Heart right ventricle (tissue), 16 donors: ENCODE measurements at regions of chr1 and their contacts with region 1.

Region 1: DNA sequence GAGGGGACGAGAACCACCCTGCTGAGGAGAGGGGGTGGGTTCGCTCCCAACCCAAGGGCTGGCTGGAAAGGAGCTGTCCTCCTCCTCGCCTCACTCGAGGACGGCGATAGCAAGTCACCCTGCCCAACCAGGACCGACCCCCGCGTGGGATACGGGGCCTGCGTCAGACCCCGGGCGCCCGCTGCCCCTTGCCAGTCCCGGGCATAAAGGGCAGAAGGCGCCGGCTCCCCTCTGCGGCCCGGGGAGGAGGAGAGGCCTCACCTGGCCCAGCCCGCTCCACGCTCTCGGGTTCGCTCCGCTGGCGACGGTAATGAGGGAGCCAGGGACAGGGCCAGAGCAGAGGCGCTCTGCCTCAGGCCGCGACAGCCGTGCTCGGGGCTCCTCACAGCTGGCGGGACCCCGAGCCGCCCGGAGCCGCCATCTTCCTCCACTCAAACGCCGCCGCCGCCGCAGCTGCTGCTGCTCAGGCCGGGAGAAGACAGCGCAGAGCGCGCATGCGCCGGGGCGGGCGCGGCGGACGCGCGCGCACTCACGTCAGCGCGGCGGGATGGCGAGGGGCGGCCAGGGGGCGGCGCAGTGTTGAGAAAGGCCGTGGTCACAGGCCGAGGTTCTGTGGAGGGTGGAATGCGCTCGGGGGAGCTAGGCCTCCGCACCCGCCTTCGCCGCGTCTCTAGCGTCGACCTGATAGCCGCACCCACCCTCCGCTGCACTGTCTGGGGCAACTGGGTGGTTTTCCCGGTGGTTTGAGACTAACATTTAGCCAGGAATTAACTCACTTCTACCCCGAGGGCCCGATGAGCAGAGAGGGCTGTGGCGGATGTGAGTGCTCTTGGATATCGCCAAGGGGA is at the start of gene FBXO42:
- DNase-seq: peak; percentile 90 to 94
- ATAC-seq: peak; percentile 96 to 99 (median 98)
- H3K4me3 ChIP-seq: peak within 1 kb of the TSS; percentile 73 to 99 (median 95)
- H3K27ac ChIP-seq: peak within 1 kb of the TSS; percentile 81 to 98 (median 96)
- H3K4me1 ChIP-seq: peaks cover 0 to 46% (median 37%) of the 10 kb centered on the region in 9 donors
- H3K27me3 ChIP-seq: no peaks in the 10 kb centered on the region
- CTCF ChIP-seq: peak in 8 of 9 donors; percentile 45 to 75 (median 60)
- total RNA-seq, gene FBXO42: 17.3 to 26.6 (median 21.4) TPM

Region 2: GRCh38 chr1:16206547-16207317 is 145.5 kb before region 1 on chr1:
- intact Hi-C with region 1: loop called in 2 of 10 experiments (anchors 5 to 10 kb)
- DNase-seq: peak; percentile 97
- ATAC-seq: peak; percentile 93 to 97 (median 96)
- H3K4me3 ChIP-seq: peak overlapping the region; percentile 9 to 64 (median 58)
- H3K27ac ChIP-seq: peak overlapping the region; percentile 73 to 96 (median 90)
- H3K4me1 ChIP-seq: peaks cover 0 to 25% (median 17%) of the 10 kb centered on the region in 9 donors
- H3K27me3 ChIP-seq: no peaks in the 10 kb centered on the region
- CTCF ChIP-seq: no peak

Region 3: DNA sequence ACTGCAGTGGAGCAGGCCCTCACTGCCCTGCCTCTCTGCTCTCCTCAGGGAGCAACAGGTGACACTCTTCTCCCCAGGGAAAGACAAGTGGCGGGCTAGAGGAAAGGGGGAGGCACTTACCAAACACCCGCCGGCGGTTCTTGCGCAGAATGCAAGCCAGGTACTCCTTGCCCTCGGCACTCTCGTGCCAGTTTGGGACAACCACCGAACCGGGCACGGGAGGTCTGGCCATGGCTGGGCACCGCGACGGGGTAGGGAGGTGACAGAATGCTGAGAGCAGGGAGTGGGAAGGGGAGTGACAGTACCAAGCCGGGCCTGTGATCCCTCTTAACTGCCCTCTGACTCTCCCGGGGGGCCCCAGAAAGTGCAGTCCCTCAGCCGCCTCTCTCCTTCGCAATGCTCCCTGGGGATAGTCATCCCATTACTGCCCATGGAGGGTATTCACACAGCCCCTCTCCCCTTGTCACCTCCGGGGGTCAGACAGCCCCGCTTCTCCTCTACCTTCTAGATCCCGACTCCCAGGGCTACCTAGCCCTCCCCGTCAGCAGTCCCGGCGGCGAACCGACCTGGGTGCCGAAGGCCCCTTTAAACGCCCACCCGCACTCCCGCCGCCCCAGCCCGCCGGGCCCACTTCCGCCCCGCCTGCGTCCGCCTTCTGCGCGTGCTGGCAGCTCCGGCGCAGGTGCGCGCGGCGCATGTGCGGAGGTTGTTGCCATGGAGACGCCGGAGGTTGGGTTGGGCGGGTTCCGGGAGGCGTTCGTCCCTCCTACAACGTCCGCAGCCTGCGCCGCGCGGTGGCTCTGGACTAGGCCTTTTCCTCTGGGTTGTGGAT is 115.5 kb before region 1 on chr1 and contains the start of gene CPLANE2:
- intact Hi-C with region 1: loop called in 1 of 10 experiments (anchors 2 kb)
- DNase-seq: peak; percentile 95
- ATAC-seq: peak; percentile 94 to 98 (median 96)
- H3K4me3 ChIP-seq: peak within 1 kb of the TSS; percentile 51 to 72 (median 69)
- H3K27ac ChIP-seq: peak within 1 kb of the TSS; percentile 52 to 93 (median 85)
- H3K4me1 ChIP-seq: peaks cover 0 to 25% (median 19%) of the 10 kb centered on the region in 9 donors
- H3K27me3 ChIP-seq: no peaks in the 10 kb centered on the region
- CTCF ChIP-seq: peak in 4 of 9 donors; percentile 1 to 32 (median 30)
- total RNA-seq, gene CPLANE2: 3.9 to 11.1 (median 7.2) TPM